Activated CD4-positive, alpha-beta memory T cell treated with anti-CD3 and anti-CD28 coated beads for 36 hours (primary cell): ENCODE measurements at regions of chr10 and their contacts with region 1.

Region 1: GRCh38 chr10:62816331-62817120 is at the start of gene EGR2:
- DNase-seq: peak; percentile 97
- H3K4me3 Mint-ChIP-seq: peak within 1 kb of the TSS; percentile 88
- H3K27ac Mint-ChIP-seq: peak within 1 kb of the TSS; percentile 100
- H3K4me1 Mint-ChIP-seq: peaks cover 40% of the 10 kb centered on the region
- H3K27me3 Mint-ChIP-seq: peaks cover 21% of the 10 kb centered on the region
- total RNA-seq, gene EGR2: 66.9 to 68.2 TPM

Region 2: GRCh38 chr10:61606951-61607907 is 1209.3 kb before region 1 on chr10:
- CTCF ChIA-PET with region 1: no interaction called
- POLR2A ChIA-PET with region 1: no interaction called
- intact Hi-C with region 1: no loop called
- DNase-seq: no peak
- H3K4me3 Mint-ChIP-seq: no peak overlapping the region
- H3K27ac Mint-ChIP-seq: no peak overlapping the region
- H3K4me1 Mint-ChIP-seq: no peaks in the 10 kb centered on the region
- H3K27me3 Mint-ChIP-seq: peaks cover 9% of the 10 kb centered on the region

Region 3: DNA sequence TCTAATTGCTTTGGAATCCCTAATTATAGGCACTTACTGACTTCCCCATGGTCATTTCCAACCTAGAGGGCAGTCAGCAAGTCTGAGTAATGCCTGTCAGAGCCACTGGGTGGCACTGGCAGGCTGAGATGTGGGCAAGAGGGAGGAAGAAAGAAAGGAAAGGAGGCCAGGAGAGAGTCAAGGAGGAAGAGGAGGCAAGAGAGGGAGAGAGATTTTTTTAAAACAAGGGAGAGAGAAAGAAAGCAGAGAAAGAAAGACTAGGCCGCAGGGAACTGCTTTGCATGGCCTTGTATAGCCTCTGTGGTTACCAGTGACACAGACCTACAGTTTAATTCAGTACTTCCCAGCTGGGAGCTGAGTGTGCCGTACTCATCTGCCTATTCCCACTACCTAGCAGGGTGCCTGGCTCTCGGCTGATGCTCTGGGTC is 222.4 kb before region 1 on chr10:
- CTCF ChIA-PET with region 1: interaction called, 44 read pairs
- POLR2A ChIA-PET with region 1: no interaction called
- intact Hi-C with region 1: loop called (anchors 1 kb)
- DNase-seq: peak; percentile 64
- H3K4me3 Mint-ChIP-seq: no peak overlapping the region
- H3K27ac Mint-ChIP-seq: no peak overlapping the region
- H3K4me1 Mint-ChIP-seq: peaks cover 2% of the 10 kb centered on the region
- H3K27me3 Mint-ChIP-seq: peaks cover 2% of the 10 kb centered on the region

Region 4: DNA sequence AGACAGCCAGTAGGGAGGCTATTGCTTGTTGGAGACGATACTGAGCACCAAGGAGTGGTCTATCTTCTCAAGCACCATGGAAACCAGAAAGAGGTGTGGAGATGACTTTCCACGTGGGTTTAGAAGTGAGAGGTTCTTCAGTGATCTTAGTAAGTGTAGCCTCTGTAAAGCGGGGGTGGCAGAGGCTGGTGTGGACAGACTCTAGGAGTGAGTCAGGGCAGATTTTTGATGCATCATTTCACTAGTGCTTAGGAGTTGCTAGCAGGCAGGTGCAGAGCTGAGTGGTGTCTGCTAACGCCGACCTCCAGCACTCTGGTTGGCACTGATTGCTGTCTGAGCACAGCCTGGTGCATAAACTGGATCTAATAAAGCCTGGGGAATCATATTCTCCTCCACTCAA is 90.4 kb before region 1 on chr10:
- CTCF ChIA-PET with region 1: interaction called, 5 read pairs
- POLR2A ChIA-PET with region 1: interaction called, 4 read pairs
- intact Hi-C with region 1: loop called (anchors 1 kb)
- DNase-seq: peak; percentile 88
- H3K4me3 Mint-ChIP-seq: no peak overlapping the region
- H3K27ac Mint-ChIP-seq: peak overlapping the region; percentile 3
- H3K4me1 Mint-ChIP-seq: peaks cover 50% of the 10 kb centered on the region
- H3K27me3 Mint-ChIP-seq: peaks cover 4% of the 10 kb centered on the region

Region 5: GRCh38 chr10:62804356-62805230 is 11.9 kb before region 1 on chr10 and contains the start of gene ADO:
- CTCF ChIA-PET with region 1: interaction called, 50 read pairs
- POLR2A ChIA-PET with region 1: interaction called, 13 read pairs
- intact Hi-C with region 1: loop called (anchors 1 kb)
- DNase-seq: peak; percentile 82
- H3K4me3 Mint-ChIP-seq: peak within 1 kb of the TSS; percentile 97
- H3K27ac Mint-ChIP-seq: peak within 1 kb of the TSS; percentile 100
- H3K4me1 Mint-ChIP-seq: peaks cover 43% of the 10 kb centered on the region
- H3K27me3 Mint-ChIP-seq: no peaks in the 10 kb centered on the region
- total RNA-seq, gene ADO: 26.7 to 27.1 TPM

Region 6: GRCh38 chr10:62980687-62981086 is 164.2 kb after region 1 on chr10:
- CTCF ChIA-PET with region 1: no interaction called
- POLR2A ChIA-PET with region 1: no interaction called
- intact Hi-C with region 1: loop called (anchors 1 kb)
- DNase-seq: peak; percentile 56
- H3K4me3 Mint-ChIP-seq: no peak overlapping the region
- H3K27ac Mint-ChIP-seq: no peak overlapping the region
- H3K4me1 Mint-ChIP-seq: peaks cover 26% of the 10 kb centered on the region
- H3K27me3 Mint-ChIP-seq: peaks cover 11% of the 10 kb centered on the region

Region 7: GRCh38 chr10:63157845-63158624 is 341.5 kb after region 1 on chr10:
- CTCF ChIA-PET with region 1: interaction called, 30 read pairs
- POLR2A ChIA-PET with region 1: interaction called, 3 read pairs
- intact Hi-C with region 1: loop called (anchors 1 kb)
- DNase-seq: peak; percentile 41
- H3K4me3 Mint-ChIP-seq: no peak overlapping the region
- H3K27ac Mint-ChIP-seq: no peak overlapping the region
- H3K4me1 Mint-ChIP-seq: peaks cover 7% of the 10 kb centered on the region
- H3K27me3 Mint-ChIP-seq: no peaks in the 10 kb centered on the region